ENCODE measurements at regions of chr6 and their contacts with region 1.

Region 1: DNA sequence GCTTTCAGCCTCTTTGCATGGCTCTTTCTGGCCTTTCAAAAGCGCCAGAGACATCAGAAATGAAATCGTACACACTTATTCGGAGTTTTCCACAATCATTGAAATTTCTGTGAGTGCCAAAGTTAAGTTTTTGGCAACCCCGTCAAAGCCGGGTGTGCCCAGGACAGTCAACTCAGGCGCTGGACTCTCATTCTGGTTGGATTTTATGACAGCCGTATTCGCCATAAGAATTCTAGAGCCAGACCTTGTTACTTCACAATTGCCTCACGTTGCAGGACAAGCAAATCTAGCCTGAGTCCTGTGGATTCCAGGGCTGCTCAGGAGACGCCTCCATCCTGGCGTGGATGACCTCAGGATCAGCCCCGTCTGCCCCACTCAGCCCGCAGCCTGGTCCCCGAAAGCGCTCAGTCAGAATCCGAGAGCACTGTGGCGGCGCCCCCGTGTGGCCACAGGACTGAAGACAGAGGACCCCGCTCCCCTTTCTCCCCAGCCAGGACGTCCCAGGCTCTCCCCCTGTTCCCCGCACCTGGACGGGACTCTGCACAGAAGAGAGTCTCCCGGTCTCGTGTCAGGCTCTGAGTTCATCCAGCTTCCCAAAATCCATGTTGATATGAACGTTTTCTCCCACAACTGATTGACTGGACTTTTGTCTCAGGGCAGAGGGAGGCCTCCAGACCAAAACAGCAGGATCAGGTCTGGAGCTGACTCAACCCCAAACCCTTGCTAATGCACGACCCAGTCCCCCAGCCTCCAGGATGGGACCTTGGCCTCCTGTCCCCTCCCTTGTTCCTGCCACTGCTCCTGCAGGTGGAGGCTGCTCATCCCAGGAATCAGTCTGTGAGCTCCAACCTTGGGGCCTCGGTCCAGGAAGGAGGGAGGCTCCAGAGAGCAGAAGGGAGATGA is 38.2 kb downstream of the MICA start:
- DNase-seq: no peak
- ATAC-seq: peak; percentile 100
- H3K4me3 ChIP-seq: no peak overlapping the region
- H3K27ac ChIP-seq: no peak overlapping the region
- H3K4me1 ChIP-seq: no peaks in the 10 kb centered on the region
- H3K27me3 ChIP-seq: no peaks in the 10 kb centered on the region; a peak in 1 of 4 replicates
- CTCF ChIP-seq: peak; percentile 81 to 92 (median 86)
- EP300 ChIP-seq: no peak
- POLR2A ChIP-seq: no peak
- RAD21 ChIP-seq: peak; percentile 88

Region 2: GRCh38 chr6:31396422-31397152 is 45.0 kb before region 1 on chr6:
- CTCF ChIA-PET with region 1: interaction called, 145 read pairs
- POLR2A ChIA-PET with region 1: interaction called, 6 read pairs
- RAD21 ChIA-PET with region 1: interaction called, 21 read pairs
- SMC1A ChIA-PET with region 1: interaction called, 71 read pairs
- in situ Hi-C with region 1: loop called (anchors 5 kb)
- intact Hi-C with region 1: loop called (anchors 1 kb)
- DNase-seq: no peak
- ATAC-seq: peak; percentile 70
- H3K4me3 ChIP-seq: no peak overlapping the region
- H3K27ac ChIP-seq: no peak overlapping the region
- H3K4me1 ChIP-seq: no peaks in the 10 kb centered on the region; the same call in none of the 2 replicates
- H3K27me3 ChIP-seq: no peaks in the 10 kb centered on the region
- CTCF ChIP-seq: peak; percentile 74 to 89 (median 86)
- EP300 ChIP-seq: no peak
- POLR2A ChIP-seq: no peak
- RAD21 ChIP-seq: peak; percentile 73

Region 3: DNA sequence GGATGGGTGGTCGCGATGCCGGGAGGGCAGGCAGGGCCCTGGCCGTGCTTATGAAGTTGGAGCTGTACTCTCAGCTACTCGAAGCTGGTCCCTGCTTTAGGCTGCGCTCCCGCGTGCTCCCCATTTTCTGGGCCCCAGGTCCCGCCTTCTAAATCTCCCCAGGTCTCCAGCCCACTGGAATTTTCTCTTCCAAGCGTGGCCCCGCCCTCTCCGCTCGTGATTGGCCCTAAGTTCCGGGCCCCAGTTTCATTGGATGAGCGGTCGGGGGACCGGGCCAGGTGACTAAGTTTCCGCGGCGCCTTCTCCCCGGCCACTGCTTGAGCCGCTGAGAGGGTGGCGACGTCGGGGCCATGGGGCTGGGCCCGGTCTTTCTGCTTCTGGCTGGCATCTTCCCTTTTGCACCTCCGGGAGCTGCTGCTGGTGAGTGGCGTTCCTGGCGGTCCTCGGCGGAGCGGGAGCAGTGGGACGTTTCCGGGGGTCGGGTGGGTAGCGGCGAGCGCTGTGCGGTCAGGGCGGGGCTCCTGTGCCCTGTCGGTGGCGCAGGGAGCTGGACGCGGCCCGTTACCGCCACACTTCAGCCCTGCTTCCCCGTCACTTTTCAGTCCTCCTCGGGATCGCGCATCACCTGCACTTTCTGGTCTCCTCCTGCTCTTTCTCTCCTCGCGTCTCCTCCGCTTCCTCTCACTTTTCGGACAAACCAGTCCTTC is 38.2 kb before region 1 on chr6 and contains the start of gene MICA:
- CTCF ChIA-PET with region 1: interaction called, 145 read pairs
- POLR2A ChIA-PET with region 1: interaction called, 6 read pairs
- RAD21 ChIA-PET with region 1: interaction called, 21 read pairs
- SMC1A ChIA-PET with region 1: interaction called, 71 read pairs
- in situ Hi-C with region 1: loop called (anchors 5 kb)
- intact Hi-C with region 1: loop called (anchors 1 kb)
- DNase-seq: no peak
- ATAC-seq: peak; percentile 80
- H3K4me3 ChIP-seq: peak within 1 kb of the TSS; percentile 71
- H3K27ac ChIP-seq: peak within 1 kb of the TSS; percentile 58
- H3K4me1 ChIP-seq: peaks cover 16% of the 10 kb centered on the region
- H3K27me3 ChIP-seq: no peaks in the 10 kb centered on the region
- CTCF ChIP-seq: no peak
- EP300 ChIP-seq: no peak
- POLR2A ChIP-seq: no peak; the same call in 1 of the 2 replicates
- RAD21 ChIP-seq: no peak
- polyA plus RNA-seq, gene MICA: 5.0 to 5.6 TPM

Region 4: DNA sequence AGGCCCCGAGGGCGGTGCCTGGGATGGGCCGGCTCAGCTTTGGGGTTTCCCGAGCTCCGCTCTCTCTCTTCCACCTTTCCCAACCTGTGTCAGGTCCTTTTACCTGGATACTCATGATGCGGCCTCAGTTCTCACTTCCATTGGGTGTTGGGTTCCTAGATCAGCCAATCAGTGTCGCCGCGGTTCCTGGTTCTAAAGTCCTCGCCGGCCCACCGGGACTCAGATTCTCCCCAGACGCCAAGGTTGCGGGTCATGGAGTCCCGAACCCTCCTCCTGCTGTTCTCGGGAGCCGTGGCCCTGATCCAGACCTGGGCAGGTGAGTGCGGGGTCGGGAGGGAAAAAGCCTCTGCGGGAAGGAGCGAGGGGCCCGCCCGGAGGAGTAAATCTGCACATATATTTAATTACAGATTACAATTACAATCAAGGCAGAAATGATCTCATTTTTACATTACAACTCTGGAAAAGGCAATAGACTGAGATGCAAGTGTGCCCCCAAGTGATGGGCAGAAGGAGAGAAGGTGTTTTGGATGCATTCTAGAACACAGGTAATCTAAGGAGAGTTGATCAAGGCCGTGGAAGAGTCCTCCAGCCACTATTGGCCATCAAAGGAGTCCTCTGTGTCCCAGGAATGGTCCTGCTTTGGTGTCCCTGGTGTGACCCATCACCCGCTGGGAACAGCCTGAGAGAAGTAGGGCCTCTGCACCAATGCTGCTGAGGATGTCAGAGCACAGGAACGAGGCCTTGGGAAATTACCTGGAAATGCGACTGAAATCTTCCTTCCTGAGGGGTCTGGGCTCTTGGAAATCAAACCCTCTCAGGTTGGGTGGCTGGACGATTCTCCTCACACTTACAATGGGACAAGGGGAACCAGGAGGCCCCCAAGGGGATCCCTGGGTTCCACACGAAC is 21.6 kb after region 1 on chr6:
- CTCF ChIA-PET with region 1: interaction called, 17 read pairs
- POLR2A ChIA-PET with region 1: no interaction called
- RAD21 ChIA-PET with region 1: interaction called, 3 read pairs
- SMC1A ChIA-PET with region 1: no interaction called
- in situ Hi-C with region 1: no loop called
- intact Hi-C with region 1: no loop called
- DNase-seq: peak; percentile 96
- ATAC-seq: peak; percentile 92
- H3K4me3 ChIP-seq: peak overlapping the region; percentile 98
- H3K27ac ChIP-seq: peak overlapping the region; percentile 89
- H3K4me1 ChIP-seq: peaks cover 11% of the 10 kb centered on the region
- H3K27me3 ChIP-seq: no peaks in the 10 kb centered on the region
- CTCF ChIP-seq: no peak
- EP300 ChIP-seq: no peak; a peak in 1 of 4 replicates
- POLR2A ChIP-seq: peak; percentile 96
- RAD21 ChIP-seq: no peak